Activated CD4-positive, alpha-beta T cell treated with anti-CD3 and anti-CD28 coated beads, Interleukin-2, amount 10 ng/mL, durations not matched to agents 7 days and 5 days (primary cell): ENCODE measurements at regions of chr11 and their contacts with region 1.

Region 1: DNA sequence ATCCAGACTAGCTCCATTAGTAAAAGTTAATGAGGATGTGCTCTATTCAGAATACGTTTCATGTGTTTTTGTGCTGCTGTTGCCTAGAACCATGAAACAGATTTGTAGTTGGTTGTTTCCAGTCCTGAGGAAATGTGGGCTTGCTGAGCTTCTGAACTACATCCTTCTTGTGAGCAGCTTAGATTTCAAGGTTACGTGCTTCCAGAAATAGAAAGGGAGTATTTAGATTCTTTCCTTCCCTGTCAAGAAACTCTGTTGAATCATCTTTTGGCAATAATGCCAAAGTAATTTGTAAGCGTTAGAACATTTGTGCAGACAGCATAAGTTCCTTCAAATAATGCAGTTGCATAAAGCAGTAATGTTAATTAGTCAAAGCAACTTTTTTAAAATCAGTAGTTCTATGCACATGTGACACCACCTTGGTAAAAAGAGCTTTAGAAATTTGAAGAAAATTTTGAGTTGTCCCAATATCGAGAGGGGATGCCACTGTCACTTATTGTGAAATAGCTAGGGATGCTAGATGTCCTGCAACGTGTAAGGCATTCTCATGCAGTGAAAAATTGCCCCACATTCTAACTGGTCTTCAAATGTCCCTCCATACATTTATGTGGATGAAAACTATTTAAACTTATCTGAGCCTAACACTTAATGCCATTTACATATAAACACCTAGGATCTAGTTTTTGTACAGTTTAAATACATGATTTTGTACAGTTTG is 169.6 kb downstream of the ETS1 start:
- DNase-seq: no peak
- H3K4me3 Mint-ChIP-seq: no peak overlapping the region
- H3K27ac Mint-ChIP-seq: no peak overlapping the region
- H3K4me1 Mint-ChIP-seq: peaks cover 37% of the 10 kb centered on the region
- H3K27me3 Mint-ChIP-seq: no peaks in the 10 kb centered on the region

Region 2: GRCh38 chr11:128389461-128389976 is 28.2 kb before region 1 on chr11:
- CTCF ChIA-PET with region 1: no interaction called
- POLR2A ChIA-PET with region 1: no interaction called
- DNase-seq: no peak
- H3K4me3 Mint-ChIP-seq: no peak overlapping the region
- H3K27ac Mint-ChIP-seq: no peak overlapping the region
- H3K4me1 Mint-ChIP-seq: peaks cover 2% of the 10 kb centered on the region
- H3K27me3 Mint-ChIP-seq: no peaks in the 10 kb centered on the region

Region 3: DNA sequence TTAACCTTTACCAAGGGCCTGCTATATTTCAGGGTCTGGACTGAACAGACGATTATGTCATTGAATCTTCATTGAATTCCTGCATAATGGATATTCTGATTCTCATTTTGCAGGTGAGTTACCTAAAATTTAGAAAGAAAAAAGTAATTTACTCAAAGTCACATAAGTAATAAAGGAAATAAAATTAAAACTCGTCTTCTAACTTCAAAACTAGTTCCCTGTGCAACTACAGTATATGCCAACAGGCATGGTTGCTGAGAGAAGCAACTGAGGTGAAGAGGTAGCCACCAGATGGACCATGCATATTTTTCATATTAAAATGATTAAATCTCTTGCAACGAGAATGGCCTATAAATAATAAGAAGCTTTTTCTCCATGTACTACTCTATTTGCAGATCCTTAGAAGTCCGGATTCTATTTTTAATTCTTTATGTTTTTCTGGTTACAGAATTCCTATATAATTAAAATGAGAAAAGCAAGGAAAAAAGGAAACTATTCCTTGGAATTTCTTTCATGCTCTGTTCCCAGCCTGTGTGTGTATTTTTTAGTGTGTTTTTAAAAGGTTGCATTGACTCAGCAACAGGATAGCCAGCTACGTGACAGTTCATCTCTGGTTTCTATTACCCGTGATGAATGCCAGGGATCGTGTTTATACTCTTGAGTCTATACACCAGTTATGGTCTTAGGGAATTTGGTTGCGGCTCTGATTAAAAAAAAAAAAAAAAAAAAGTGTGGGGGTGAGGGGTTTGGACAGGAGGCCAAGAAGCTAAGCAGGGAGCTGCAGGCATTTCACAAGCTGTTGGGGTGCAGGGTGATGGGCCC is 17.2 kb before region 1 on chr11:
- CTCF ChIA-PET with region 1: interaction called, 12 read pairs
- POLR2A ChIA-PET with region 1: no interaction called
- DNase-seq: no peak
- H3K4me3 Mint-ChIP-seq: no peak overlapping the region
- H3K27ac Mint-ChIP-seq: no peak overlapping the region
- H3K4me1 Mint-ChIP-seq: peaks cover 14% of the 10 kb centered on the region
- H3K27me3 Mint-ChIP-seq: no peaks in the 10 kb centered on the region

Region 4: GRCh38 chr11:128428935-128429334 is 11.2 kb after region 1 on chr11:
- CTCF ChIA-PET with region 1: interaction called, 11 read pairs
- POLR2A ChIA-PET with region 1: interaction called, 3 read pairs
- DNase-seq: no peak
- H3K4me3 Mint-ChIP-seq: no peak overlapping the region
- H3K27ac Mint-ChIP-seq: no peak overlapping the region
- H3K4me1 Mint-ChIP-seq: peaks cover under 1% of the 10 kb centered on the region
- H3K27me3 Mint-ChIP-seq: no peaks in the 10 kb centered on the region